Tibial artery (tissue), 4 donors: ENCODE measurements at regions of chr10 and their contacts with region 1.

Region 1: GRCh38 chr10:64598604-64599003 is 1077.4 kb downstream of the REEP3 start:
- DNase-seq: no peak
- H3K4me3 ChIP-seq: no peak overlapping the region
- H3K27ac ChIP-seq: no peak overlapping the region
- H3K4me1 ChIP-seq: no peaks in the 10 kb centered on the region
- H3K27me3 ChIP-seq: no peaks in the 10 kb centered on the region
- CTCF ChIP-seq: no peak

Region 2: DNA sequence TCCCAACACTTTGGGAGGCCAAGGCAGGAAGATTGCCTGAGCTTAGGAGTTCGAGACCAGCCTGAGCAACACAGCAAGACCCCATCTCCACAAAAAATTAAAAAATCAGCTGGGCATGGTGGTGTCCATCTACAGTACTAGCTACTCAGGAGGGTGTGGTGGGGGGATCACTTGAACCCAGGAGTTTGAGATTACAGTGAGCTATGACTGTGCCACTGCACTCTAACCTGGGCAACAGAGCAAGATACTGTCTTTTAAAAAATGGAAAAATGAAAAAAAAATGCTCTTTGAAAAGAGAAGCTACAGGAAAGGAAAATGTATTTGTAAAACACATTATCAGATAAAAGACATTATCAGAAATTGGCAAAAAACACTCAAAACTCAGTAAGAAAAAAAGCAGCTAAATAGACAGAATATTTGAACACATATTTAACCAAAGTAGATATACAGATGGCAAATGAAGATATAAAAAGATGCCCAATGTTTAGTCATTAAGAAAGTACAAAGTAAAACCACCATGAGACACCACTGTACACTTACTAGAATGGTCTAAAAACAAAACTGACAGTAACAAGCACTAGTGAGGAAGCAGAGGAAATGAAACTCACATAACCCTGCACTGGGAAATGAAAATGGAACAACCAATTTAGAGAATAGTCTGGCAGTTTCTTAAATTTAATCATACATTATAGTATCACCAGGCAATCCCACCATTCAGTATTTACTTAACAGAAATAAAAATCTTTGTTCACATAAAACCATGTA is 1425.0 kb before region 1 on chr10:
- intact Hi-C with region 1: no loop called
- DNase-seq: no peak
- H3K4me3 ChIP-seq: no peak overlapping the region
- H3K27ac ChIP-seq: no peak overlapping the region
- H3K4me1 ChIP-seq: peaks cover 0 to 9% (median 2%) of the 10 kb centered on the region in 4 donors
- H3K27me3 ChIP-seq: no peaks in the 10 kb centered on the region
- CTCF ChIP-seq: no peak

Region 3: GRCh38 chr10:64379898-64380297 is 218.7 kb before region 1 on chr10:
- intact Hi-C with region 1: no loop called
- DNase-seq: no peak
- H3K4me3 ChIP-seq: no peak overlapping the region
- H3K27ac ChIP-seq: no peak overlapping the region
- H3K4me1 ChIP-seq: no peaks in the 10 kb centered on the region
- H3K27me3 ChIP-seq: no peaks in the 10 kb centered on the region
- CTCF ChIP-seq: no peak

Region 4: DNA sequence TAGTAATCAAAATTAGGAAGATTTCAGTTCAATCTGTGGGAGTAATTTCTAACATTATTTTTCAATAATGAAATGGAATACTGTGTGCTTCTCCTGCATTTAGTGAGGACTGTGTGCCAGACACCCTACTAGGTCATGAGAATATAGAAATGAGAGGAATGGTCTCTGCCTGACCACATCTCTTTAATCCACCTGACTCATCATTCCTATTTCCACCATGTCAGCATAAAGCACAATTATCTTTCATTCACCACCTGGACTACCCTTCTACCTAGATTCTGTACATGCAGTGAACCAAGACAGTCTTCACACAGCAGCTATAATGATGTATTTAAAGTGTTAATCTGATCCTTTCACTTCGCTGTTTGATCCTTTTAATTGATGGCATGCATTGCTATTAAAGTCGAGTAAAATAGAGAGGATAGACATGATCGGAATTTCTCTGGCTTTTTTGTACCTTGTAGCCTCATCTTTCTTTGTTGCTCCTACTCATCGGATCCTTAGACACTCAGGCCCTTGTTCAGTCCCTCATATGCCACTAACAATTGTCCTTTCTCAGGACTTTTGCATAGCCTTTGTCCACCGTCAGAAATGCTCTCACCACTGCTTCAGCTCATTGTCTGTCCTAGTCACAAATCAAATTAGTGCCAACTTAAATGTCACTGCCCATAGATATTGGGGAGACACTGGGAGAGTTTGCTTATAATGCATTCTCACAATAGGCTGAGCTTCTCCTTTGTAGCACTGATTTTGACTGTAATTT is 40.3 kb before region 1 on chr10:
- intact Hi-C with region 1: no loop called
- DNase-seq: no peak
- H3K4me3 ChIP-seq: no peak overlapping the region
- H3K27ac ChIP-seq: no peak overlapping the region
- H3K4me1 ChIP-seq: no peaks in the 10 kb centered on the region
- H3K27me3 ChIP-seq: no peaks in the 10 kb centered on the region
- CTCF ChIP-seq: no peak

Region 5: DNA sequence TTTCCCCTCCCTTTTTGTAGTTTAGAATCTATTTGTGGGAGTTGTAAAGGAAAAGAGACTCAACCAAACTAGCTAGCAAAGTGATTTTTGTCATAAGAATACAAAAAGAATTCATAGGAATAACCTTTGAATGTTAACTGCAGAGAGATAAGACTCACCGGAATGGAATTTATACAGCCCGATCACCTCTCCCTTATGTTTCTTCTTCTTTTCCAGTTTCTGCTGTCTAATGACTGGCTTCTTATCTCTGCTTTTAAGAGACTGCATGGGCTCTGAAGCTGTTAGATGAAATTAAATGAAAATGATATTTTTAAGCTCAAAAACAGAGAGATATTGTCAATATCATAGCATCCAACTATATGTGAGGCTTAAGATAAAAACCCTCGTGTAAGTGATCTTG is 18.5 kb after region 1 on chr10:
- intact Hi-C with region 1: loop called (anchors 2 kb)
- DNase-seq: no peak
- H3K4me3 ChIP-seq: no peak overlapping the region
- H3K27ac ChIP-seq: no peak overlapping the region
- H3K4me1 ChIP-seq: no peaks in the 10 kb centered on the region
- H3K27me3 ChIP-seq: no peaks in the 10 kb centered on the region
- CTCF ChIP-seq: no peak